AG04449 (cell line): ENCODE measurements at regions of chr17 and their contacts with region 1.

Region 1: GRCh38 chr17:50244771-50245170 is 29.5 kb upstream of the TMEM92 start:
- DNase-seq: no peak
- H3K4me3 ChIP-seq: no peak overlapping the region
- CTCF ChIP-seq: no peak

Region 2: GRCh38 chr17:50114849-50115357 is 129.9 kb before region 1 on chr17:
- CTCF ChIA-PET with region 1: no interaction called
- POLR2A ChIA-PET with region 1: no interaction called
- DNase-seq: no peak
- H3K4me3 ChIP-seq: no peak overlapping the region
- CTCF ChIP-seq: peak; percentile 69

Region 3: DNA sequence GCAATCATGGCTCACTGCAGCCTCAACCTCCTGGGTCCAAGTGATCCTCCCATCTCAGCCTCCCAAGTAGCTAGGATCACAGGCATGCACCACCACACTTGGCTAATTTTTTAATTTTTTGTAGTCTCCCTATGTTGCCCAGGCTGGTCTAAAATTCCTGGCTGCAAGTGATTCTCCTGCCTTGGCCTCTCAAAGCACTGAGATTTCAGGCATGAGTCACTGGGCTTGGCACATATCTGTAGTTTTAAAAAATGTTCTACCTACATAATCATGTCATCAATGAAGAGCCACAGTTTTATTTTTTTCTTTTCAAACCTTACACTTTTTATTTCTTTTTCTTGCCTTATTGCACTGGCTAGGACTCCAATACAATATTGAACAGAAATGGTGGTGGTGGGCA is 10.2 kb before region 1 on chr17:
- CTCF ChIA-PET with region 1: no interaction called
- POLR2A ChIA-PET with region 1: no interaction called
- DNase-seq: no peak
- H3K4me3 ChIP-seq: no peak overlapping the region
- CTCF ChIP-seq: no peak

Region 4: DNA sequence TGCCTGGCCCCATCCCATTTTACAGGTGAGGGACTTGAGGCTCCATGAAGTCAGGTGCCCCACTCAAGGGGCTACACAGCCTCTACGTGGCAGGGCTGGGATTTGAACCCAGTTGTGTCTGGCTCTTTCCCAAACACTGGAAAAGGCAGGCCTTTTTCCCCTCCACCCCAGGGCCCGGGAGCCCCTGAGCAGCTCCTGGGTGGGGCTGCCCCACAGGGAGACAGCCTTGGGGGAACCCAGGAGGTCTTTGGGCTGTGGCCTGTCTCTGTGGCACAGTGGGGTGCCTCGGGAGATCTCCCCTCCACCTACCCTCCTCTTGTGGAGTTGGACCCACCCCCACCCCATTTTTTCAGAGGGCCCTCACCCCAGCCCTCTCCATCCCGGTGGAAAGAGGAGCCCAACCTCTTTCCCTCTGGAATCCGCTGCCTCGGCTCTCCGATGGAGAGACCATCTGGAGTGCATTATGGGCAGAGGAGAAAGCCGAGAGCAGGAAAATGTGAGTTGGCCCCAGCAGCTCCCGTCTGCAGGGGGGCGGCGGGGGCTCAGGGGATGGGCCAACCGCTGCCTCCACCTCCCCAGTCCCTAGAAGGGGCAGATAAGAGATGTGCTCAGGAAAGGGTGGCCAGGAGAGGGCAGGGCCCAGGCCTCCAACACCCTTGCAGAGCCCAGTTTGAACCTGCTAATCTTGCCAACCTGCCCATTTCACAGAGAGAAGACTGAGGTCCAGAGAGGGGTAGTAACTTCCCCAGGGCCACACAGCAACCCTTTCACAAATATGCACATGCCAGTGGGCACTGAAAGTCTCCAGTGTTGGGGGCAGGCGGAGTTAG is 14.1 kb after region 1 on chr17:
- CTCF ChIA-PET with region 1: interaction called, 14 read pairs
- POLR2A ChIA-PET with region 1: interaction called, 3 read pairs
- DNase-seq: no peak
- H3K4me3 ChIP-seq: no peak overlapping the region
- CTCF ChIP-seq: no peak

Region 5: GRCh38 chr17:50719144-50719923 is 474.6 kb after region 1 on chr17 and contains the start of gene LUC7L3:
- CTCF ChIA-PET with region 1: no interaction called
- POLR2A ChIA-PET with region 1: no interaction called
- DNase-seq: peak; percentile 52
- H3K4me3 ChIP-seq: peak within 1 kb of the TSS; percentile 93
- CTCF ChIP-seq: no peak